Panc1 (cell line): ENCODE measurements at regions of chr6 and their contacts with region 1.

Region 1: GRCh38 chr6:157974341-157974894 is 7.2 kb upstream of the SYNJ2 start:
- DNase-seq: no peak
- ATAC-seq: peak; percentile 49; the same call in 1 of the 2 replicates
- H3K4me3 ChIP-seq: no peak overlapping the region
- H3K27ac ChIP-seq: peak overlapping the region; percentile 72; the same call in 1 of the 2 replicates
- H3K4me1 ChIP-seq: peaks cover 7% of the 10 kb centered on the region
- H3K27me3 ChIP-seq: no peaks in the 10 kb centered on the region
- CTCF ChIP-seq: no peak

Region 2: DNA sequence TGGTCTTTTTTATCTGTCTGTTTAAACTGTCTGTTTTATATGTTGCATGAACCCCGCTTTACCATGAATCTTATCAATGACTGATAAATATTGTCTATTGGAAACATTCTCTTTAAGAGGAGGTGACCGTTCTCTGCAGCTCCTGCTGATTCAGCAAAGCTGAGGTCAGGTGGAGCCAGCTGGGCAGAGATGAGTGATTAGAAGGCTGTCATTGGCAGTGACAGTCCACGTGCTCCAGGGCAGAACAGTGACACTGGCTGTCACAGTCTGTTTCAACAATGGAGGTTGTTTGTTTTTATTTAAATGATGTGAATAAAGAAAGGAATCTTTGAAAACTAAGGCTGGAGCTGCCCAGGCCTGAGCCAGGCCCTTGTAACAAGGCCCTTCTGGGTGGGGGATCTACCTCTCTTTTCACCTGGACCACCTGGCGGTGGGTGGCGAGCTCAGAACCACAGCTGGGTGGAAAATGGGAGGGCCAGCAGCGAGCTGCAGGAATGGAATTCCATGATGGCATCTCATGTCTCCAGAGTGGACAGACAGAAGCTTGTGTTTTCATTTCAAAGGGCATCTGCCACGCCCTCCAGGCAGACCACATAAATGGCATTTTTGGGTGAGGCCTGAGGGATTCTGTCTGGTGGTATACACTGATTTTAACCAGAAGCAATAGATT is 19.8 kb after region 1 on chr6:
- CTCF ChIA-PET with region 1: interaction called, 24 read pairs
- POLR2A ChIA-PET with region 1: no interaction called
- in situ Hi-C with region 1: no loop called
- intact Hi-C with region 1: no loop called
- DNase-seq: no peak
- ATAC-seq: no peak
- H3K4me3 ChIP-seq: no peak overlapping the region
- H3K27ac ChIP-seq: peak overlapping the region; percentile 55; the same call in 1 of the 2 replicates
- H3K4me1 ChIP-seq: peaks cover 73% of the 10 kb centered on the region
- H3K27me3 ChIP-seq: no peaks in the 10 kb centered on the region
- CTCF ChIP-seq: no peak

Region 3: DNA sequence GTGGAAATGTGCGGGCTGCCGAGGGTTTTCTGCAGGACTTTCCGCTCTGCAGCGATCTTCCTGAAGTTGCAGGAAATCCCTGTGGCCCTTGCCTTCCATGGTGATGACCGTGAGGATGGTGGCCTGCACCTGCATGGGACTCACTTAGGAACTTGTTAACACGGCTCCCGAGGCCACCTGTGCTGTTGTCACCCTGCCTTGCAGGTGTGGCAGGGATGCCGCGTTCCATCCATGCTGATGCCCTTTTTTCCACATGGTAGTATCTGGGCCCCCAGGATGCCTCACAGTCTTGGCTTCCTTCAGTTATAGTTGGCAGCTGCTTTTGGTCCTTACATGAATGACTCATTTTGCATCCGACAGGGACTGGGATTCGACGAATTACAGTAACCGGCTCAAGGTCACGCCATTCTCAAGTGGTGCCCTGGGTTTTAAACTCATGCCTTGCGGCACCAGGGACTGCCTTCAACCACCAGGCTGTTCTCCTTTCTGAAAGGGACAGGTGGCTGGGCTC is 44.5 kb after region 1 on chr6:
- CTCF ChIA-PET with region 1: no interaction called
- POLR2A ChIA-PET with region 1: no interaction called
- in situ Hi-C with region 1: no loop called
- intact Hi-C with region 1: no loop called
- DNase-seq: no peak
- ATAC-seq: no peak
- H3K4me3 ChIP-seq: no peak overlapping the region
- H3K27ac ChIP-seq: no peak overlapping the region
- H3K4me1 ChIP-seq: peaks cover 58% of the 10 kb centered on the region
- H3K27me3 ChIP-seq: no peaks in the 10 kb centered on the region
- CTCF ChIP-seq: no peak

Region 4: DNA sequence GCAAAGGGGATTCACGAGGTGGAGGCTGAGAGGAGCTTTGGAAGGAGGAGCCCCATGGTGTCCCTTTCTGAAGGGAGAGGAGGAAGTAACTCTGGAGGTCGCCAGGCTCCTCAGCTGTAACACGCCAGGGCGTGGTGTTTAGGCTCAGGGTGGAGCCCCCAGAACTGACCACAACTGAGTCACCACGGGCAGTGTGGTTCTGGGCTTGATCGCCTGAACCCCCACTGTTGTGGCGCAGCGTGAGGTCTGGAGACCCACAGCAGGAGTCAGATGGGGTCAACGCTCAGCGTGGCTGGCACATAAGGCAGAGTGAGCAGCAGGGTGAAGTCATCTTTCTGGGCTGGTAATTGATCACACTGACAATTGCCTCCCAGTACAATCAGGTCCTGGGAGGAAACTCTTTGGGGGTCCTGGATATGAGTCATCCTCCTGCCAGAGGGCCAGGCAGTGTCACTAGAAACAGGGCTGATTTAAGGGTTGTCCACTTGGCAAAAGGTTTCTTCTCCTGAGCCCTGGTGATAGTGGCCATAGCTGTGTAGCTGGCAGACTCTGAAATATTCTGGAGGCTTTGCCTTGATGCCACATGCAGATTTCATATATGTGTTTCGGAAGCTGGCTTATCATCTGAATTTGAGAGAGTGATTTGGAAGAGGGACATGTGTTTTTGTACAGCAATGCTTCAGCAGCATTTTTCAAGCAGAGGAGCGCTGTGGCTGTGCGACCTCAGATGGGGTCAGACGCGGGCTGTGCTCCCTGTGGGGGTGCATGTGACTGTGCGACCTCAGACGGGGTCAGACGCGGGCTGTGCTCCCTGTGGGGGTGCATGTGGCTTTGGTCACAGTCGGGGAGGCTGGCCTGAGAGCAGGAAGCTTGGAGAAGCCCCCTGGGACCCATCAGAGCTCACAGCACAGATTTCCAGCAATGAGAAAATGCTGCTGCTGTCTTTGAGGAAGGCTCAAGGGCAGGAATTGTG is 57.2 kb after region 1 on chr6:
- CTCF ChIA-PET with region 1: no interaction called
- POLR2A ChIA-PET with region 1: no interaction called
- in situ Hi-C with region 1: loop called (anchors 5 kb)
- intact Hi-C with region 1: no loop called
- DNase-seq: no peak
- ATAC-seq: peak; percentile 32
- H3K4me3 ChIP-seq: no peak overlapping the region
- H3K27ac ChIP-seq: peak overlapping the region; percentile 83
- H3K4me1 ChIP-seq: peaks cover 53% of the 10 kb centered on the region
- H3K27me3 ChIP-seq: no peaks in the 10 kb centered on the region
- CTCF ChIP-seq: no peak